ENCODE measurements at regions of chr2 and their contacts with region 1.

Region 1: DNA sequence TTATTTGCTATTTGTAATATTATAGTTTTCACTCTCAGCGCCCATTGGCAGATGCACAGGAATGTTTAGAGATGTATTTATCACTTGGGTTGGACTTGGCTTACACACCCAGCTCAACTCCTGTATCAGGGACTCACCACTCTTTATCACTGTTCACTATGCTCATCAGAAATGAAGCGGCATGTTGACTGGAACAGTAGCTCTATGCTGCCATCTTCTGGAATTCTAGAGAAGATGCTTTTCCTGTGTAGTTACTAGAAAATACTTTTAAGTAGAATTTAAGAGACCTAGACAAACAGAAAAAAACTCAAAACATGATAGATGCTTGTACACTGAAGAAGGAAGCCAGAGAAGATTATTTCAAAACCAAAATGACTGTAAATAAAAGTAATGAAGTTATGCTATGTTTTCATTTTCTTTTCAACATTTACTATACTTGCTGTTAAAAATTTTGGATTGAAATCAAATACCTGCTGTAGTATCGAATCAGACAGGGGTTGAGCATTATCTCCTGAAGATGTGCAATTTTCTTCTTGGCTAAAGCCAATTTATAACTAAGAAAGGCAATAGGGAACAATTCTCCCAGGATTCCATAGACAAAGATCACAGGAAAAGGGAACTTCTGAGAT is 47.4 kb upstream of the NXPH2 start:
- DNase-seq: peak; percentile 18
- H3K4me3 ChIP-seq: no peak overlapping the region
- H3K27ac ChIP-seq: no peak overlapping the region
- H3K4me1 ChIP-seq: peaks cover 0 to 2% of the 10 kb centered on the region in 2 experiments; a peak in 1 of 4 replicates
- H3K27me3 ChIP-seq: no peaks in the 10 kb centered on the region
- CTCF ChIP-seq: peak; percentile 84
- EP300 ChIP-seq: no peak
- RAD21 ChIP-seq: peak; percentile 86

Region 2: GRCh38 chr2:137865954-137866540 is 961.5 kb before region 1 on chr2:
- CTCF ChIA-PET with region 1: interaction called, 34 read pairs
- POLR2A ChIA-PET with region 1: no interaction called
- DNase-seq: peak; percentile 36
- H3K4me3 ChIP-seq: no peak overlapping the region; a peak in 1 of 4 replicates
- H3K27ac ChIP-seq: no peak overlapping the region
- H3K4me1 ChIP-seq: no peaks in the 10 kb centered on the region
- H3K27me3 ChIP-seq: no peaks in the 10 kb centered on the region
- CTCF ChIP-seq: peak; percentile 74
- EP300 ChIP-seq: no peak
- RAD21 ChIP-seq: peak; percentile 86

Region 3: GRCh38 chr2:137888845-137889244 is 938.7 kb before region 1 on chr2:
- CTCF ChIA-PET with region 1: interaction called, 45 read pairs
- POLR2A ChIA-PET with region 1: no interaction called
- DNase-seq: peak; percentile 25
- H3K4me3 ChIP-seq: no peak overlapping the region; a peak in 1 of 4 replicates
- H3K27ac ChIP-seq: no peak overlapping the region
- H3K4me1 ChIP-seq: no peaks in the 10 kb centered on the region
- H3K27me3 ChIP-seq: no peaks in the 10 kb centered on the region
- CTCF ChIP-seq: peak; percentile 45; the same call in 1 of the 2 replicates
- EP300 ChIP-seq: no peak
- RAD21 ChIP-seq: peak; percentile 62

Region 4: GRCh38 chr2:137910641-137911040 is 916.9 kb before region 1 on chr2:
- CTCF ChIA-PET with region 1: interaction called, 32 read pairs
- POLR2A ChIA-PET with region 1: no interaction called
- DNase-seq: no peak
- H3K4me3 ChIP-seq: no peak overlapping the region
- H3K27ac ChIP-seq: no peak overlapping the region
- H3K4me1 ChIP-seq: no peaks in the 10 kb centered on the region
- H3K27me3 ChIP-seq: no peaks in the 10 kb centered on the region; the same call in 1 of the 2 replicates
- CTCF ChIP-seq: peak; percentile 72
- EP300 ChIP-seq: no peak
- RAD21 ChIP-seq: peak; percentile 80

Region 5: DNA sequence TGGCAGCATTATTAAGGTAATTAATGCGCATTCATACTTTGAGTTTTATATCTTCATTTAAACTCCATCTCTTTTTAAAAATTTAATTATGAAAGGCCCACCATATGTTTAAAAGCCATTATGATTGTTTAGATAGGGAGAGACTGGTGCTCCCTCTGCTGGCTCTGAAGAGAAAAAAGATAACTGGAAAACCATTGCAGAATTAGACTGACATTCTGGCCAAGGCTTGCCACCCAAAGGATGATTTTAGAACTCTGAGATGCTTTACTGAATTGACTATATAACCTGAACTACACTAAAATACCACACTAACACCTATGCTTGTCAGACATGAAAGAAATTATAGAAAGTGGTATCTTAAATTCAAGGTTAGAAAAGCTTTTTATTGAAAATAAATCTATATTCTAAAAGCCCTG is 453.5 kb before region 1 on chr2:
- CTCF ChIA-PET with region 1: interaction called, 10 read pairs
- POLR2A ChIA-PET with region 1: no interaction called
- DNase-seq: peak; percentile 36
- H3K4me3 ChIP-seq: no peak overlapping the region
- H3K27ac ChIP-seq: no peak overlapping the region
- H3K4me1 ChIP-seq: no peaks in the 10 kb centered on the region; a peak in 1 of 4 replicates
- H3K27me3 ChIP-seq: no peaks in the 10 kb centered on the region
- CTCF ChIP-seq: peak; percentile 92
- EP300 ChIP-seq: no peak
- RAD21 ChIP-seq: peak; percentile 81

Region 6: GRCh38 chr2:138501425-138502283 is 325.9 kb before region 1 on chr2 and contains the start of gene SPOPL:
- CTCF ChIA-PET with region 1: no interaction called
- POLR2A ChIA-PET with region 1: no interaction called
- DNase-seq: peak; percentile 98
- H3K4me3 ChIP-seq: peak within 1 kb of the TSS; percentile 86 to 89
- H3K27ac ChIP-seq: peak within 1 kb of the TSS; percentile 83 to 95
- H3K4me1 ChIP-seq: peaks cover 5 to 10% of the 10 kb centered on the region in 2 experiments; a peak in 2 of 4 replicates
- H3K27me3 ChIP-seq: no peaks in the 10 kb centered on the region
- CTCF ChIP-seq: no peak
- EP300 ChIP-seq: peak in 1 of 2 experiments; percentile 53; a peak in 1 of 4 replicates
- RAD21 ChIP-seq: peak; percentile 3; the same call in 1 of the 2 replicates
- polyA plus RNA-seq, gene SPOPL: 4.5 and 5.6 TPM in 2 replicates

Region 7: GRCh38 chr2:138814120-138814898 is 13.2 kb before region 1 on chr2:
- CTCF ChIA-PET with region 1: interaction called, 21 read pairs
- POLR2A ChIA-PET with region 1: no interaction called
- DNase-seq: no peak
- H3K4me3 ChIP-seq: no peak overlapping the region
- H3K27ac ChIP-seq: no peak overlapping the region
- H3K4me1 ChIP-seq: peaks cover 0 to 5% of the 10 kb centered on the region in 2 experiments; a peak in 1 of 4 replicates
- H3K27me3 ChIP-seq: no peaks in the 10 kb centered on the region
- CTCF ChIP-seq: peak; percentile 30
- EP300 ChIP-seq: no peak
- RAD21 ChIP-seq: 0 out of 2 replicates have a peak, but pooled peaks have one; percentile 7

Region 8: DNA sequence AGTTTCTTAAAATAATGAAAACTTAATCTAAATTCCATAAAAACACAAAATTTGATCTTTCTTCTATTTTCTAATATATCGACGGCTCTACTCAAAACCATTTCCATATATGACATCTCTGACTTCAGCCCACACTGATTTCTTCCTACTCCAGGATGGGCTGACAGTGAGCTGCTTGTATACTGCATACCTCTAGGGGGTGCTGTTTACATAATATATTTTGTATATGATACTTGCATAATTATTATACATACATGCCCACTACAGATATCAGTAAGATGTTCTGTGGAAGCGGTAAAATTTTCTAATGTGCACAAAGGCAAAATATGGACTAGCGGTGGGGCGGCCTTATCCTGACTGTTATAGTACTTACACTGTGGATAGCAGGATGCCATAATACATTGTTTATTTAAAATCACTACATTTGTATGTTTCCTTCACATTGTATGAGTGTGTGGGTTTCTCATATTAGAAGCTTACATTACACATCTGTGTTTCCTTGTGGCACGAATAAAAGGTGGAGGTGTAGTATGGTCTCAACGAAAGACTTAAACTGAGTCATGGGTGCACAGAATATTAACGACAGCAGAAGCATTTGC is 18.8 kb after region 1 on chr2:
- CTCF ChIA-PET with region 1: interaction called, 18 read pairs
- POLR2A ChIA-PET with region 1: no interaction called
- DNase-seq: peak; percentile 47
- H3K4me3 ChIP-seq: no peak overlapping the region
- H3K27ac ChIP-seq: no peak overlapping the region
- H3K4me1 ChIP-seq: no peaks in the 10 kb centered on the region
- H3K27me3 ChIP-seq: no peaks in the 10 kb centered on the region
- CTCF ChIP-seq: peak; percentile 86
- EP300 ChIP-seq: no peak
- RAD21 ChIP-seq: peak; percentile 72